WTC11 (cell line): ENCODE measurements at regions of chr19 and their contacts with region 1.

Region 1: GRCh38 chr19:45643024-45643926 is 4.1 kb upstream of the EML2 start:
- DNase-seq: peak; percentile 96
- ATAC-seq: peak; percentile 40
- H3K4me3 Mint-ChIP-seq: peak overlapping the region; percentile 86
- H3K27ac Mint-ChIP-seq: peak overlapping the region; percentile 93
- H3K4me1 Mint-ChIP-seq: peaks cover 40% of the 10 kb centered on the region
- H3K27me3 Mint-ChIP-seq: peaks cover 24% of the 10 kb centered on the region
- CTCF ChIP-seq: peak; percentile 99

Region 2: DNA sequence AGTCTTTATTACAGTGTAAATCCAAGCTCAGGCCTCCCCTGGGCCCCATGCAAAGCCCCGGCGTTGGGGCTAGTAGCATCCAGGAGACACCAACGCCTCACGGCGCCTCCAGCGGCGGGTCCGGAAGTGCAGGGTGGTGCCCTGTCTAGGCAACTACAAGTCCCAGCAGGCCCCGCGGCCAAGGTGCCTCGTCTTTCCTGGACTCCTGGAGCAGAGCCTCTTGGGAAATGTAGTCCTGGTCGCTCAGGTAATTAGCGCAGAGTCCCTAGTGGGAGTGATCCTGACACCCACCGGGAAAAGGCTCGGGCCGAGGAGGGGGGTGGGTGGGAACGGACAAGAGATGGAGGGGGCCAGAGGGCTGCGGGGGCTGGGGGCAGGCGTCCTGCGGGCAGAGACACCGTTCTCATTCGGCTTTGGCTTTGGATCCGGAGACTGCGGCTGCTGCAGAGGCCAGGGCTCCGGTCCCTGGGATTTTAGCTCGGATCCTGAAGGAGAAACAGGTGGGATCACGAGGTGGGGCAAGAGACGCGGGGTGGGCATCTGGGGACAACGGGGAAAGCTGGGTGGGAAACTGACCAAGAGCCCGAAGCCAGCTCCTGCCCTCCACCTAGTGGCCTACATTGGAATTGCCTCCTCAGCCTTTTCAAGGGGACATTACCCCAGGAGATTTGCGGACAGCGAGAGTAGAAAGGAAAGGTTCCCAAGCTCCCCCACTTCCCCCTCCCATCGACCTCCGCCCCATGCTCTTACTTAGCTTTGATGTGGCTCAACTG is 157.8 kb before region 1 on chr19:
- CTCF ChIA-PET with region 1: interaction called, 51 read pairs
- POLR2A ChIA-PET with region 1: interaction called, 3 read pairs
- DNase-seq: peak; percentile 100
- ATAC-seq: peak; percentile 96
- H3K4me3 Mint-ChIP-seq: peak overlapping the region; percentile 81
- H3K27ac Mint-ChIP-seq: peak overlapping the region; percentile 61; the same call in 1 of the 2 replicates
- H3K4me1 Mint-ChIP-seq: peaks cover 4% of the 10 kb centered on the region
- H3K27me3 Mint-ChIP-seq: peaks cover 5% of the 10 kb centered on the region; the same call in 1 of the 2 replicates
- CTCF ChIP-seq: peak; percentile 90

Region 3: GRCh38 chr19:45569619-45570421 is 73.5 kb before region 1 on chr19:
- CTCF ChIA-PET with region 1: interaction called, 10 read pairs
- POLR2A ChIA-PET with region 1: no interaction called
- DNase-seq: peak; percentile 89
- ATAC-seq: peak; percentile 95
- H3K4me3 Mint-ChIP-seq: no peak overlapping the region
- H3K27ac Mint-ChIP-seq: no peak overlapping the region
- H3K4me1 Mint-ChIP-seq: peaks cover 3% of the 10 kb centered on the region
- H3K27me3 Mint-ChIP-seq: no peaks in the 10 kb centered on the region
- CTCF ChIP-seq: peak; percentile 69

Region 4: GRCh38 chr19:45601524-45602374 is 41.5 kb before region 1 on chr19 and contains the start of gene GPR4:
- CTCF ChIA-PET with region 1: interaction called, 127 read pairs
- POLR2A ChIA-PET with region 1: interaction called, 5 read pairs
- DNase-seq: peak; percentile 79
- ATAC-seq: peak; percentile 85
- H3K4me3 Mint-ChIP-seq: peak within 1 kb of the TSS; percentile 65
- H3K27ac Mint-ChIP-seq: no peak within 1 kb of the TSS
- H3K4me1 Mint-ChIP-seq: peaks cover 54% of the 10 kb centered on the region
- H3K27me3 Mint-ChIP-seq: peaks cover 74% of the 10 kb centered on the region
- CTCF ChIP-seq: no peak
- total RNA-seq, gene GPR4: 0.11 to 0.48 TPM (median 0.44 TPM) in 3 replicates

Region 5: GRCh38 chr19:45632468-45633196 is 10.6 kb before region 1 on chr19:
- CTCF ChIA-PET with region 1: interaction called, 47 read pairs
- POLR2A ChIA-PET with region 1: no interaction called
- DNase-seq: peak; percentile 96
- ATAC-seq: peak; percentile 88
- H3K4me3 Mint-ChIP-seq: peak overlapping the region; percentile 57
- H3K27ac Mint-ChIP-seq: peak overlapping the region; percentile 99
- H3K4me1 Mint-ChIP-seq: peaks cover 19% of the 10 kb centered on the region
- H3K27me3 Mint-ChIP-seq: no peaks in the 10 kb centered on the region
- CTCF ChIP-seq: no peak